Mammary epithelial cell (primary cell): ENCODE measurements at regions of chr14 and their contacts with region 1.

Region 1: GRCh38 chr14:60561845-60562746 is 53.1 kb downstream of the SIX6 start:
- DNase-seq: peak; percentile 47
- H3K4me3 ChIP-seq: no peak overlapping the region
- H3K27ac ChIP-seq: no peak overlapping the region
- H3K4me1 ChIP-seq: no peaks in the 10 kb centered on the region
- H3K27me3 ChIP-seq: no peaks in the 10 kb centered on the region
- CTCF ChIP-seq: peak; percentile 21 to 43

Region 2: GRCh38 chr14:60064491-60065072 is 497.5 kb before region 1 on chr14:
- CTCF ChIA-PET with region 1: no interaction called
- dilution Hi-C with region 1: no loop called
- in situ Hi-C with region 1: loop called in 1 of 2 experiments (anchors 25 kb)
- intact Hi-C with region 1: loop called (anchors 5 kb)
- DNase-seq: peak; percentile 6
- H3K4me3 ChIP-seq: no peak overlapping the region
- H3K27ac ChIP-seq: no peak overlapping the region
- H3K4me1 ChIP-seq: peaks cover 7% of the 10 kb centered on the region
- H3K27me3 ChIP-seq: no peaks in the 10 kb centered on the region
- CTCF ChIP-seq: peak; percentile 60 to 62

Region 3: GRCh38 chr14:60266021-60266937 is 295.8 kb before region 1 on chr14:
- CTCF ChIA-PET with region 1: no interaction called
- dilution Hi-C with region 1: no loop called
- in situ Hi-C with region 1: no loop called
- intact Hi-C with region 1: loop called (anchors 1 kb)
- DNase-seq: peak; percentile 25
- H3K4me3 ChIP-seq: no peak overlapping the region
- H3K27ac ChIP-seq: no peak overlapping the region
- H3K4me1 ChIP-seq: no peaks in the 10 kb centered on the region
- H3K27me3 ChIP-seq: no peaks in the 10 kb centered on the region
- CTCF ChIP-seq: peak; percentile 68 to 71

Region 4: DNA sequence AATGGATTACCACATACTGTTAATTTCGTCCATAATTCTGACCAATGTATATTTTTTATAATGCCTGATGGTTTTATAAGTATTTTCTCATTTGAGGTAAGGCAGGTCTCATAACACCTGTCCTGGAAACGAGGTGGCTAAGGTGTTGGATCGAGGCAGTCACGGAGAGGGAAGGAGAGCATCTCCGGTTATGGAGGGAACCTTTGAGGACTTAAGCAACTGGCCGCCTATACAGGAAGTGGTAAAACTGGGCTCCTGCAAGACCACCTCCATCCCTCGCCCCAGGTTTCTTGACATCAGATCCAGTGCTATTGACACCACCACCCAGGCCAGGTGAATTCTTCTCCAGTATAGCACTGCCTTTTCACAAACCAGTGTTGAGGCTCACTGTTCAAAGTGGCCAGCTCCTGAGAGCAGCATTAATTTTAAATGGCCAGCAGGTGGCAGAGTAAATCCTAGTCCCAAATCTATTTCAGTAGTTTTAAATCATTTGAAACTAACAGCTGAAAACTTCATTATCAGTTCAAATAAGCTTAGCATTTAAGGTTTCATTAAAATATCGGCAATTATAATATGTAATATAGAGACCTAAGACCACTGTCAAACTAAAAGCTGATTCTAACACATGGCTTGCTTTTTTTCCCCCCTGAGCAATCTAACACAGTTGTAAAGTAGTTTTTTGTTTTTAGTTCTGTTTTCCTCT is 212.3 kb before region 1 on chr14:
- CTCF ChIA-PET with region 1: no interaction called
- dilution Hi-C with region 1: no loop called
- in situ Hi-C with region 1: loop called in 1 of 2 experiments (anchors 5 kb)
- intact Hi-C with region 1: loop called (anchors 1 kb)
- DNase-seq: peak; percentile 25
- H3K4me3 ChIP-seq: no peak overlapping the region
- H3K27ac ChIP-seq: no peak overlapping the region
- H3K4me1 ChIP-seq: no peaks in the 10 kb centered on the region
- H3K27me3 ChIP-seq: no peaks in the 10 kb centered on the region
- CTCF ChIP-seq: peak; percentile 58 to 64

Region 5: DNA sequence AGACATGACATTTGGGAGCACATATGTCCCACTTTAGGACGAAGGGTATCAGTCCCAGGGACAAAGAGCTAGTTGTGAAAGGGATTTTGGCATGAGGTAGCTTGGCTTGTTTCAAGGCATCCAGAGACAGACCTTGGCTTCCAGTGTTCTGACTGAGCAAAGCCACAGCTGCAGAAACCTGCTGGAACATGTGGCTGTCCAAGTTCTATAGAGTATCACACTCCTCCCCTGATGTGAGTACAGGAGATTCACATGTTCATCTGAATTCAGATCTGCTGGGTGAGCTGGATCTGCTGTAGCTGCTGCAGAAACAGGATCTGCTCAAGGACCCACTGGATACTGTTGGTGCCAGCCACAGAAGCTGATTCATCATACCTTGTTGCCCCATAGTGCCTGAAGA is 66.2 kb before region 1 on chr14:
- CTCF ChIA-PET with region 1: no interaction called
- dilution Hi-C with region 1: no loop called
- in situ Hi-C with region 1: no loop called
- intact Hi-C with region 1: no loop called
- DNase-seq: peak; percentile 19
- H3K4me3 ChIP-seq: no peak overlapping the region
- H3K27ac ChIP-seq: no peak overlapping the region
- H3K4me1 ChIP-seq: no peaks in the 10 kb centered on the region
- H3K27me3 ChIP-seq: no peaks in the 10 kb centered on the region
- CTCF ChIP-seq: no peak